Activated T-helper 2 cell treated with anti-CD3 and anti-CD28 coated beads, Interferon-gamma antibody, Interleukin-2, Interleukin-4, amounts not matched to agents 10 μg/mL and 5 μg/mL and 100 μg/mL, durations not matched to agents 14 hours and 24 hours and 36 hours (primary cell): ENCODE measurements at regions of chr3 and their contacts with region 1.

Region 1: DNA sequence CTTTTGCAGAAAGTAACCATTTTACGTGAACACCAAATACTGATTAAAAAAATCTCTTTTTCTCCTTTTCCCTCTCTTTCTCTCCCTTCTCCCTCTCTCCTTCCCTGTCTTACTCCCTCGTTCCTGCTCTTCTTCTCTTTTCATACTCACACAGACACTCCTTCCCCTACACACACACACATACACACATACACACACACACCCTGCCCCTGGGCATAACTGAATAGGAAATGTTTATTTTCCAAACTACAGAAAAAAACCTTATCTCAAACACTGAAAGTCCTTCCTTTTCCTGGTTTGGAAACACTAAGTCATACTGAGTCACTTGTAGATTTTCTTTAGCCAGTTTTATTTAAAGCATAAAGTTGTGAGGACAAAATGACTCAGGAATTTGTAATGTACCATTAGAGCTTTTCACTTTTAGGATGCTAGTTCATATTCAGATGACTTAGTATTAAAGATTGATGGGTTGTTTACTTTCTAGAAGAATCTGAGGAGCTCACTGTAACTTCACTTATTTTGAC is 62.4 kb downstream of the MBNL1 start:
- DNase-seq: no peak
- H3K4me3 Mint-ChIP-seq: peak overlapping the region; percentile 0
- H3K27ac Mint-ChIP-seq: peak overlapping the region; percentile 78
- H3K4me1 Mint-ChIP-seq: peaks cover 63% of the 10 kb centered on the region
- H3K27me3 Mint-ChIP-seq: no peaks in the 10 kb centered on the region

Region 2: DNA sequence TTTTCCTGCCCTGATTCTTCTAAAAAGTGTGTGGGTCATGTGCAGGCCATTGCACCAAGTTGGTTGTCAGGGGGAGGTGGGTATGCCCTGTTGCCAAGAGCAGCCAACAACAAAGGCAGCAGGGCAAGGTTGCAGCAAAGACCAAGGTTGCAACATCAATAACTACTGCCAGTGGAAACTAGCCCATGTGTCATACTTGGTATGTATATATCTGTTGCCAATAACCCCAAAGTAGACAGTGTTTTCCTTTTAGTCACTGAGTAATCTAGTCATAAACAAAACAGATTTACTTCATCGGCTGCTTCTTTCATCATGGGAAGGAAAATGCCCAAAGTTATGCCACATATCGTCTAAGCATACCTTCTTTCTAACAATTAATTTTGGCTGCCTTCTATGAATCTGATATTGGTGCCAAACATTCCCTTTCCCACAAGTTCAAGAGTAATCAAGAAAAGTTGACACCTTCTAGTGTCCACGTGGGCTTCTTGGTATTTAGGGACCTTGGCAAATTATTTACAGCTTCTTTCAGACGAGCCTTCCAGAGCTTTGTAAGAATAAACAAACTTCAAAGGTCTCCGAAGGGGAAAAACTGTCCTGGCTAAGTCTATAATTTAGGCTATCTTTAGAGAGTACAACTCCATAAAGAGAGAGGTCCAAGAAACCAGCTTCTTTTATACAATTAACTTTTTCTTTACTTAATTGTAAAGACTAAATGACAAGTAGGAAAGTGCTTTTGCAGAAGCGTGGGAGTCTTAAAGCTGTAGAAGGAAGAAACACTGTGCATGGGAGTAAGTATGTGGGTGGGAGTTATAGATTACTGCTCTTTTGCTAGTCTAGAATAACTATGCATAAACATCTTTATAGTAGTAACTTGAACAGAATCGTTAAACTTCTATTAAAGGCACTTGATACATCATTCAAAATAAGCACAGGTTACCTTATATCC is 72.4 kb before region 1 on chr3:
- intact Hi-C with region 1: loop called (anchors 5 kb)
- DNase-seq: peak; percentile 49
- H3K4me3 Mint-ChIP-seq: peak overlapping the region; percentile 74
- H3K27ac Mint-ChIP-seq: peak overlapping the region; percentile 97
- H3K4me1 Mint-ChIP-seq: peaks cover 78% of the 10 kb centered on the region
- H3K27me3 Mint-ChIP-seq: no peaks in the 10 kb centered on the region

Region 3: GRCh38 chr3:152298393-152299242 is 32.5 kb before region 1 on chr3:
- intact Hi-C with region 1: loop called (anchors 2 kb)
- DNase-seq: peak; percentile 47
- H3K4me3 Mint-ChIP-seq: peak overlapping the region; percentile 78
- H3K27ac Mint-ChIP-seq: peak overlapping the region; percentile 97
- H3K4me1 Mint-ChIP-seq: peaks cover 66% of the 10 kb centered on the region
- H3K27me3 Mint-ChIP-seq: no peaks in the 10 kb centered on the region

Region 4: GRCh38 chr3:152350139-152350538 is 19.1 kb after region 1 on chr3:
- intact Hi-C with region 1: loop called (anchors 2 kb)
- DNase-seq: no peak
- H3K4me3 Mint-ChIP-seq: no peak overlapping the region
- H3K27ac Mint-ChIP-seq: no peak overlapping the region
- H3K4me1 Mint-ChIP-seq: peaks cover 29% of the 10 kb centered on the region
- H3K27me3 Mint-ChIP-seq: no peaks in the 10 kb centered on the region

Region 5: DNA sequence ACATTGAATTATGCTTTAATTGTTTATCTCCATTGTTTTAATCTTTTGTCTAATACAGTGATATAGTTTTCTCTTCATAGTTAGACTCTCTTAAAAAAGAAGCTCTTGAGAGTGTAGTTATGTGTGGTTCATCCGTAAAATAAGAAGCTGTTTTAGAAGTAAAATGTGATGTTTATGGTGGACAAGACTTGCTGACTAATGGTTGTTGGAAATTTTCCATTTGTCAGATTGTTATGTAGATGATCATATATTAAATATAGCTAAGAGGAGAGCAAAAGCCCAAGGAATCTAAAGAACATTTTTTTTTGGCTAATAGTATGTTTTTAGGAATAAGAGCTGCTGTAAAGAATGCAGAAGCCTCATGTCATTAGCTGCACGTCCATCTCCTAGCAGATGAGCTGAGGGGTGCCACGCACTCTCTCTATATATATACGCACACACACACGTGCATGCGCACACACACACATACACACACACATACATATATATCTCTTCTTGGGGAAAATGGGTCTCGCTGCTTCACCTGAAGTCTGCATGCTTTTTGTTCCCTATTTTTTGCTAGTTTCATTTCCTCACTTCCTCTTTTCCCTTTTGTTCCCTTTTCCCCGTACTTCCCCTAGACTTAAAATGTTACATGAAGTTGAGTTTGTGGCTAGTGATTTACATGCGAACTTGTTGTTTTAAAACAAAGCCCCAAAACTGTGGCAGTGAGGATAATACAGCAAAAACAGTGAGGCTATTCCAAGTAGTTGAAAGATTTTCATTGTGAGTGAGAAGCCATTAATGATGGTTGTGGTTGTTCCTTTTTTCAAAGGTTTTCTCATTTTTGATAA is 45.5 kb after region 1 on chr3:
- intact Hi-C with region 1: no loop called
- DNase-seq: no peak
- H3K4me3 Mint-ChIP-seq: no peak overlapping the region
- H3K27ac Mint-ChIP-seq: peak overlapping the region; percentile 37
- H3K4me1 Mint-ChIP-seq: peaks cover 29% of the 10 kb centered on the region
- H3K27me3 Mint-ChIP-seq: no peaks in the 10 kb centered on the region

Region 6: GRCh38 chr3:152444029-152444641 is 113.1 kb after region 1 on chr3:
- intact Hi-C with region 1: loop called (anchors 10 kb)
- DNase-seq: no peak
- H3K4me3 Mint-ChIP-seq: no peak overlapping the region
- H3K27ac Mint-ChIP-seq: peak overlapping the region; percentile 14
- H3K4me1 Mint-ChIP-seq: peaks cover 51% of the 10 kb centered on the region
- H3K27me3 Mint-ChIP-seq: no peaks in the 10 kb centered on the region